Caco-2 (cell line): ENCODE measurements at regions of chr19 and their contacts with region 1.

Region 1: GRCh38 chr19:38033658-38034498 is 126.9 kb downstream of the SIPA1L3 start:
- DNase-seq: no peak
- H3K4me3 ChIP-seq: no peak overlapping the region
- H3K4me3 Mint-ChIP-seq: no peak overlapping the region
- H3K27ac Mint-ChIP-seq: no peak overlapping the region
- H3K4me1 ChIP-seq: no peaks in the 10 kb centered on the region; the same call in 1 of the 2 replicates
- H3K4me1 Mint-ChIP-seq: peaks cover 15% of the 10 kb centered on the region
- H3K27me3 ChIP-seq: no peaks in the 10 kb centered on the region
- H3K27me3 Mint-ChIP-seq: no peaks in the 10 kb centered on the region
- CTCF ChIP-seq: no peak

Region 2: DNA sequence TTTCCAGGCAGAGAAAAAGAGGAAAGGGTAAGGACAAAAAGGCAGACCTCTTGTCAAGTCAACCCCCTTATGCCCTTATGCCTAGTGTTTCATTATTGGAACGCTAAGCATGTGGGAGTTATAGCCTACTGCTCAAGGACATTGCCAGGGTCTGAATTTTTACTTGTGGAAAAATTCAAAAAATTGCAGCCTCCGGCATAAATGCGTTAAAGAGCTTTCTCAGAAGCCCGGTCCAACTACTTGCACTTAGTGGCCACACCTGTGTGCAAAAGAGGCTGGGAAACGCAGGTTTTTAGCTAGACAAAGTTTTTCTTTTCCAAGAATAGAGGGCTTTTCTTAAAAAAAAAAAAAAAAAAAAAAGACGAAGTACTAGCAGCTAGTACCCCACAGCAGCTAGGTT is 50.3 kb after region 1 on chr19:
- CTCF ChIA-PET with region 1: no interaction called
- POLR2A ChIA-PET with region 1: interaction called, 10 read pairs
- intact Hi-C with region 1: no loop called
- DNase-seq: no peak
- H3K4me3 ChIP-seq: no peak overlapping the region
- H3K4me3 Mint-ChIP-seq: no peak overlapping the region
- H3K27ac Mint-ChIP-seq: no peak overlapping the region
- H3K4me1 ChIP-seq: peaks cover 7% of the 10 kb centered on the region; the same call in 1 of the 2 replicates
- H3K4me1 Mint-ChIP-seq: peaks cover 8% of the 10 kb centered on the region
- H3K27me3 ChIP-seq: no peaks in the 10 kb centered on the region
- H3K27me3 Mint-ChIP-seq: no peaks in the 10 kb centered on the region
- CTCF ChIP-seq: no peak